ENCODE measurements at regions of chr13 and their contacts with region 1.

Region 1: DNA sequence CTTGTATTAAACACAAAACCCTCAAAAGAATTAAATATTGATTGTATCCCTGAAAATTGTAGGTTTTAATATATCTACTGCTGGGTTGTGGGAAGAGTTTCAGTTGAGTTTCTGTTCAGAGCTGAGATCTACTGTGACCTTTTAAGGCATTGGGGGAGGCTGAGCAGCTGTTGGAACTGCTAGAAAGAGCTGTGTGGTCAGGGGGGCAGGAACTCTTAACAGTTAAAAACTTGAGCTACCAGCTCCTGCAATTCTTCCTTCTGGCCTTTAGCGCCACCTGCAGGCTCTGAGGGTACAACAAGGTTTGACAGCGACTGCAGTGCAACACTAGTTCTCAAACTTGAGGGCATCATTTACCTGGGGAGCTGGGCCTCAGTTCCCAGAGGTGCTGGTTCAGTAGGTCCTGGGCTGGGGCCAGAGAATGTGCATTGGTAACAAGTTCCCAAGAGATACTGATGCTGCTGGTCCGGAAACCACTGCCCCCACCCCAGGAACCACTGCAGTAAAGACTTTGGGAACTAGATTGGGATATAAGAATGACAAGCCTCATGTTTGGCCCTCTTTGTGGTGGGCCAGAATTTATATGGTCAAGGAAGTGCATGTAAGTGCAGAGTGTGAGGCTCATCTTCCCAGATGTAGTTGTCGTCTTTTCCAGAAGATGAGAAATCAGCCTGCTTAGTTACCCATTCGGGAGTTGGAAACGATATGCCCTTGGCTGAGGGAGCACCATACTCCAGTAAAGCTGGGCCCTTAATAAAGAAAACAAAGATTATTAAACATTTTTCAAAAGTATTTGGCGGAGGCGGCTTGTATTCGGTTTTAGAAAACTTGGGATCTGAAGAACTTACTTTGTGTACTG is 2.6 kb downstream of the RNASEH2B start:
- DNase-seq: peak; percentile 97
- ATAC-seq: peak; percentile 62
- H3K4me3 Mint-ChIP-seq: peak overlapping the region; percentile 4; the same call in 1 of the 2 replicates
- H3K27ac Mint-ChIP-seq: peak overlapping the region; percentile 32
- H3K4me1 Mint-ChIP-seq: peaks cover 64% of the 10 kb centered on the region
- H3K27me3 Mint-ChIP-seq: no peaks in the 10 kb centered on the region
- CTCF ChIP-seq: peak; percentile 67

Region 2: GRCh38 chr13:49976314-49977258 is 935.6 kb before region 1 on chr13:
- CTCF ChIA-PET with region 1: interaction called, 15 read pairs
- POLR2A ChIA-PET with region 1: no interaction called
- DNase-seq: peak; percentile 76
- ATAC-seq: peak; percentile 89
- H3K4me3 Mint-ChIP-seq: no peak overlapping the region
- H3K27ac Mint-ChIP-seq: no peak overlapping the region
- H3K4me1 Mint-ChIP-seq: 0 out of 2 replicates have a peak, but pooled peaks cover 5% of the 10 kb centered on the region
- H3K27me3 Mint-ChIP-seq: no peaks in the 10 kb centered on the region; the same call in 1 of the 2 replicates
- CTCF ChIP-seq: peak; percentile 95

Region 3: GRCh38 chr13:50801087-50801931 is 110.9 kb before region 1 on chr13:
- CTCF ChIA-PET with region 1: interaction called, 21 read pairs
- POLR2A ChIA-PET with region 1: no interaction called
- DNase-seq: peak; percentile 65
- ATAC-seq: peak; percentile 98
- H3K4me3 Mint-ChIP-seq: peak overlapping the region; percentile 58
- H3K27ac Mint-ChIP-seq: no peak overlapping the region
- H3K4me1 Mint-ChIP-seq: peaks cover 14% of the 10 kb centered on the region
- H3K27me3 Mint-ChIP-seq: no peaks in the 10 kb centered on the region
- CTCF ChIP-seq: peak; percentile 47

Region 4: GRCh38 chr13:50843257-50844083 is 68.7 kb before region 1 on chr13 and contains the start of gene DLEU7:
- CTCF ChIA-PET with region 1: interaction called, 15 read pairs
- POLR2A ChIA-PET with region 1: no interaction called
- DNase-seq: peak; percentile 79
- ATAC-seq: peak; percentile 76
- H3K4me3 Mint-ChIP-seq: peak within 1 kb of the TSS; percentile 78
- H3K27ac Mint-ChIP-seq: no peak within 1 kb of the TSS
- H3K4me1 Mint-ChIP-seq: peaks cover 26% of the 10 kb centered on the region
- H3K27me3 Mint-ChIP-seq: peaks cover 24% of the 10 kb centered on the region
- CTCF ChIP-seq: no peak
- total RNA-seq, gene DLEU7: 3.0 to 3.6 TPM (median 3.1 TPM) in 3 replicates

Region 5: DNA sequence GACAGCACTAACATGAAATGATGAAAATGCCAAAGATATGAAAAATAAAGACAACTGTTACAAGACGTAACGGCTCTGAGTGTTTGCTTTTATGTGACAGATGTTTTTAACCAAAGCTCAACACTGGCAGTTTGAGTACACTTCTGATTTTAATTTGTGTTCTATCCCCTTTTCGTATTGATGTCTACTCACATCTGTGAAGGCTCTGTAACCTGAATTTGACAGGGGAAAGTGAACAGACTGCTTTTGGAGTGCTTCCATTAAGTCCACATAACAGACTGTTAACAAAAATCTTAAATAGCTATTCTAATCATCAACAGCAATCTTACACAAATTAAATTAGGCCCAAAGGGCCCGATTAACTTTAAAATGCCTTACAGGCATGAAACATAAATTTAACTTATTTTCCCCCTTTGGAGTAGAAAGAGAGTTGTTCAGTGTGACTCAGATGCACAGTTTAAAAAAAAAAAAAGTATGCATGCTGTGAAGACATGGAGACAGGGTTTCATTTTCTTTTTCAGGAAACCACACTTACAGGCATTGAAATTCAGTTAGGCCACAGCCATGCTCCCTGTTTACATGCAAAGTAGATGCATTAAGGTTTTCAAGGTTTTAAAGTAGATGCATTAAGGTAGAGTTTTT is 18.8 kb before region 1 on chr13:
- CTCF ChIA-PET with region 1: interaction called, 20 read pairs
- POLR2A ChIA-PET with region 1: no interaction called
- DNase-seq: no peak
- ATAC-seq: peak; percentile 91
- H3K4me3 Mint-ChIP-seq: peak overlapping the region; percentile 49
- H3K27ac Mint-ChIP-seq: peak overlapping the region; percentile 80
- H3K4me1 Mint-ChIP-seq: peaks cover 40% of the 10 kb centered on the region
- H3K27me3 Mint-ChIP-seq: peaks cover 6% of the 10 kb centered on the region
- CTCF ChIP-seq: no peak

Region 6: GRCh38 chr13:51070005-51070649 is 158.0 kb after region 1 on chr13:
- CTCF ChIA-PET with region 1: interaction called, 19 read pairs
- POLR2A ChIA-PET with region 1: no interaction called
- DNase-seq: peak; percentile 93
- ATAC-seq: peak; percentile 87
- H3K4me3 Mint-ChIP-seq: no peak overlapping the region
- H3K27ac Mint-ChIP-seq: no peak overlapping the region
- H3K4me1 Mint-ChIP-seq: peaks cover 23% of the 10 kb centered on the region
- H3K27me3 Mint-ChIP-seq: peaks cover 7% of the 10 kb centered on the region
- CTCF ChIP-seq: peak; percentile 90

Region 7: GRCh38 chr13:51134763-51135365 is 222.7 kb after region 1 on chr13:
- CTCF ChIA-PET with region 1: no interaction called
- POLR2A ChIA-PET with region 1: no interaction called
- DNase-seq: no peak
- ATAC-seq: peak; percentile 26; the same call in 1 of the 2 replicates
- H3K4me3 Mint-ChIP-seq: no peak overlapping the region
- H3K27ac Mint-ChIP-seq: no peak overlapping the region
- H3K4me1 Mint-ChIP-seq: no peaks in the 10 kb centered on the region; the same call in 1 of the 2 replicates
- H3K27me3 Mint-ChIP-seq: no peaks in the 10 kb centered on the region; the same call in none of the 2 replicates
- CTCF ChIP-seq: no peak

Measured in WTC11 (cell line).